Psoas muscle (tissue), 8 donors: ENCODE measurements at regions of chr7 and their contacts with region 1.

Region 1: GRCh38 chr7:81986723-81987470 is 217.1 kb upstream of the HGF start:
- DNase-seq: no peak
- ATAC-seq: no peak
- H3K4me3 ChIP-seq: no peak overlapping the region
- H3K27ac ChIP-seq: no peak overlapping the region
- H3K4me1 ChIP-seq: no peaks in the 10 kb centered on the region
- H3K27me3 ChIP-seq: no peaks in the 10 kb centered on the region
- CTCF ChIP-seq: no peak

Region 2: DNA sequence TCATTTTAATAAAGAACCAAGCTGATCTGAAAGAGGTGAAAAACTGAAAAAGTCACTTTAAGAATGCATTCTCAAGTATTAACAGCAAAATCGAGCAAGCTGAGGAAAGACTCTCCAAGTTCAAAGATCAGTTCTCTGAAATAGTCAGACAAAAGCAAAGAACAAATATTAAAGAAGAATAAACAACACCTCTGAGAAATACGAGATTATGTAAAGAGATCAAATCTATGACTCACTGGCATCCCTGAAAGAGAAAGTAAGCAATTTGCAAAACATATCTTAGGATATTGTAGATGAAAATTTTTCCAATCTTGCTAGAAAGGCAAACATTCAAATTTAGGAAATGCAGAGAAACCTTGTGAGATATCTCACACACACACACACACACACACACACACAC is 78.7 kb before region 1 on chr7:
- intact Hi-C with region 1: no loop called
- DNase-seq: no peak
- ATAC-seq: no peak
- H3K4me3 ChIP-seq: no peak overlapping the region
- H3K27ac ChIP-seq: no peak overlapping the region
- H3K4me1 ChIP-seq: no peaks in the 10 kb centered on the region
- H3K27me3 ChIP-seq: no peaks in the 10 kb centered on the region
- CTCF ChIP-seq: no peak

Region 3: GRCh38 chr7:81973117-81973516 is 13.8 kb before region 1 on chr7:
- intact Hi-C with region 1: loop called in 1 of 2 experiments (anchors 2 kb)
- DNase-seq: no peak
- ATAC-seq: no peak
- H3K4me3 ChIP-seq: no peak overlapping the region
- H3K27ac ChIP-seq: no peak overlapping the region
- H3K4me1 ChIP-seq: no peaks in the 10 kb centered on the region
- H3K27me3 ChIP-seq: no peaks in the 10 kb centered on the region
- CTCF ChIP-seq: no peak